ENCODE measurements at regions of chr1 and their contacts with region 1.

Region 1: GRCh38 chr1:206489980-206490770 is 17.2 kb upstream of the RASSF5 start:
- DNase-seq: peak; percentile 89
- H3K4me3 Mint-ChIP-seq: no peak overlapping the region
- H3K27ac Mint-ChIP-seq: no peak overlapping the region
- H3K4me1 Mint-ChIP-seq: no peaks in the 10 kb centered on the region
- H3K27me3 Mint-ChIP-seq: no peaks in the 10 kb centered on the region
- CTCF ChIP-seq: peak; percentile 100

Region 2: DNA sequence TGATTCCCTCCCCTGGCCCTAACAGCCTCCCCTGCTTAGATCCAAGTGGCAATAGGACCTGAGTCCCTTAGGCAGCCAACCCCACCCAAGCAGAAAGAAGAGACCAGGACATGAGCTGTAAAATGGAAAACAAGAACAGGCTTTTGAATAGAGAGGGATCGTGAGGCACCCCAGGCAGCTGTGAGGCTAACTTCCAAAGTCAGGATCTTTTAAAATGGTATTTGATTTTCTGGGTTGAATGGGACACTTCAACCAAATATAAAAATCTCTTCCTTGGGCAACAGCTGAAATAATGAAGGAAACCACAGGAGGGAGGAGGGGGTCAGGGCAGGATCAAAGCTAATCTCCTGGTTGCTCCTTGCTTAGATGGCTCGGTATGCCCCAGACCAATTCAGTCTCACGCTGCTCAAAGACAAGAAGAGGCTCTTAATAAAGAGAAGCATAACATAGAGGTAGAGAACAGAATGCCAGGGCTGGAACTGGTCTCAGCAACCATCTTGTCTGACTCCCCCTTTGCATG is 344.3 kb before region 1 on chr1:
- CTCF ChIA-PET with region 1: no interaction called
- POLR2A ChIA-PET with region 1: no interaction called
- intact Hi-C with region 1: no loop called
- DNase-seq: no peak
- H3K4me3 Mint-ChIP-seq: no peak overlapping the region
- H3K27ac Mint-ChIP-seq: no peak overlapping the region
- H3K4me1 Mint-ChIP-seq: no peaks in the 10 kb centered on the region
- H3K27me3 Mint-ChIP-seq: peaks cover 60% of the 10 kb centered on the region
- CTCF ChIP-seq: no peak

Region 3: GRCh38 chr1:206469933-206470691 is 20.1 kb before region 1 on chr1 and contains the start of gene IKBKE:
- CTCF ChIA-PET with region 1: interaction called, 31 read pairs
- POLR2A ChIA-PET with region 1: interaction called, 3 read pairs
- intact Hi-C with region 1: no loop called
- DNase-seq: peak; percentile 85
- H3K4me3 Mint-ChIP-seq: peak within 1 kb of the TSS; percentile 75
- H3K27ac Mint-ChIP-seq: peak within 1 kb of the TSS; percentile 61
- H3K4me1 Mint-ChIP-seq: peaks cover 43% of the 10 kb centered on the region
- H3K27me3 Mint-ChIP-seq: peaks cover 13% of the 10 kb centered on the region
- CTCF ChIP-seq: no peak
- total RNA-seq, gene IKBKE: 7.1 and 12.1 TPM in 2 replicates

Region 4: GRCh38 chr1:206507284-206508129 is 17.3 kb after region 1 on chr1 and contains the start of gene RASSF5:
- CTCF ChIA-PET with region 1: interaction called, 166 read pairs
- POLR2A ChIA-PET with region 1: interaction called, 5 read pairs
- intact Hi-C with region 1: no loop called
- DNase-seq: peak; percentile 87
- H3K4me3 Mint-ChIP-seq: peak within 1 kb of the TSS; percentile 72
- H3K27ac Mint-ChIP-seq: peak within 1 kb of the TSS; percentile 72
- H3K4me1 Mint-ChIP-seq: peaks cover 74% of the 10 kb centered on the region
- H3K27me3 Mint-ChIP-seq: no peaks in the 10 kb centered on the region
- CTCF ChIP-seq: no peak
- total RNA-seq, gene RASSF5: 8.3 and 9.6 TPM in 2 replicates

Region 5: GRCh38 chr1:206544562-206545257 is 54.5 kb after region 1 on chr1:
- CTCF ChIA-PET with region 1: interaction called, 145 read pairs
- POLR2A ChIA-PET with region 1: interaction called, 5 read pairs
- intact Hi-C with region 1: no loop called
- DNase-seq: peak; percentile 89
- H3K4me3 Mint-ChIP-seq: no peak overlapping the region
- H3K27ac Mint-ChIP-seq: no peak overlapping the region
- H3K4me1 Mint-ChIP-seq: no peaks in the 10 kb centered on the region
- H3K27me3 Mint-ChIP-seq: no peaks in the 10 kb centered on the region
- CTCF ChIP-seq: peak; percentile 98

Region 6: DNA sequence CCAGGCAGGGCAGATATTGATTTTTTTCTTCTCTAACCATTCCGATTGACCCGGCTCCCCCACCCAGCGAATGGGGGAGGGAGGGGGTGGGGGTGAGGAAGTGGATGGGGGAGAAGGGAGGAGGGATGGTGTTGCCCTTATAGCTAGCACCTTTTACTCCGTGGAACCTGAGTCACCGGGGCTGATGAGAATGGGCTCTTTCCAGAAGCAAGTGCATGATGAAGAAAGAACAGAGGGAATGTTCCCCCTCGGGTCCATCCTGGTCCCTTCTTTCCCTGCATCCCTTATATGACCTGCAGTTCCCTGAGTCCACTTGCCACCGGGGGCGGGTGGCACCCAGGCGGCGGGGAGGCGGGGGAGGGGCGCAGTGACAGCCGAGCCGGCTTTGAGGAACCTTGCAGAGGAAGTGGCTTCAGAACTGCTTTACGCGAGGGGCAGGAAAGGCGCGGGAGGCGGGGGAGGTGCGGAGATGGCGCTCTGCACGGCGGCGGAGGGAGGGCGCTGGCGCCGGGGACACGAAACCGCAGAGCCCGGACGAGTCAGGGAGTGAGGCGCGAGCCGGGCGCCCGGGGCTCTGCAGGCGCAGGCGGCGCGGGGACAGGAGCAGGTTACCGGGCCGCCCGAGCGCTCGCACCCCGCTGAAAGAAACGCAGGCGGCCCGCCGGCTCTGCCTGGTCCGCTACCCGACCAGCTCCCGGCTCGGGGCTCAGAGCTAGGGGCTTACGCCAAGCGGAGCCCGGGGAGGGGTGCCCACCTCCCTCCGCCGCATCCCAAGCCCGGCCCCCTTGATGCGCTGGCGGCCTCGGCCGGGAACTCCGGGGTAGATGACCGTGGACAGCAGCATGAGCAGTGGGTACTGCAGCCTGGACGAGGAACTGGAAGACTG is 66.8 kb after region 1 on chr1:
- CTCF ChIA-PET with region 1: interaction called, 16 read pairs
- POLR2A ChIA-PET with region 1: interaction called, 3 read pairs
- intact Hi-C with region 1: no loop called
- DNase-seq: peak; percentile 66
- H3K4me3 Mint-ChIP-seq: peak overlapping the region; percentile 68
- H3K27ac Mint-ChIP-seq: no peak overlapping the region
- H3K4me1 Mint-ChIP-seq: no peaks in the 10 kb centered on the region
- H3K27me3 Mint-ChIP-seq: no peaks in the 10 kb centered on the region
- CTCF ChIP-seq: no peak

Region 7: DNA sequence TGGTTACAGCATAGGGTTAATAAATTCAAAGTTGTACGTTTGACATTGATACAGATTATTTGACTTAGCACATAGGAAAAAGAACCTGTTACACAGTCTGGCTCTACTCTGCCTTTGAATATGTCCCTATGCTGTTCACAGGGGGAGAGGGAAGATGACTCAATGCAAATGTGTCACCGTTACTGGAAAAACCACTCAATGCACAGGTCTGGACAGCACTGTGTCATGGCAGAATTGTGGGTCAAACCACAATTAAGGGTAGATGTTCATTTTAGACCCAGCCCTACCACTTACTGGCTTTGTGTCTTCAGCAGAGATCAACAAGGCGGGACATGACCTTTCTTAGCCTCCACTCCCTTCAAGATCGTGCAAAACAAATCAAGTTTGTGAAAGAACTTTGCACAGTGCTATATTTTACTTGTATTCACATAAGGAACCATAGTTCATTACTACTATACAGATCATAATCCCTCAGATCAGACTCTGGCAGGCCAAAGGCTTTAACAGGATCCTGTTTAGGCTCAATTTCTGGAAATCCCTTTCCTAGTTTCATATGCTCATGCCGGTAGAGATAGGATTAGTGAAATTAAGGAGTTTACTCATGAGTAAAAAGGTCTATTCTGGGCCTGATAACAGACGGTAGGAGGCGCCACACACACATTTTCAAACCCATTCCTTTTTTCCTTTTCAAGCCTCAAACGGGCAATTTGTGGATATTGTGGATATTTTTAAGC is 100.0 kb after region 1 on chr1:
- CTCF ChIA-PET with region 1: interaction called, 851 read pairs
- POLR2A ChIA-PET with region 1: interaction called, 25 read pairs
- intact Hi-C with region 1: no loop called
- DNase-seq: peak; percentile 95
- H3K4me3 Mint-ChIP-seq: no peak overlapping the region
- H3K27ac Mint-ChIP-seq: peak overlapping the region; percentile 66
- H3K4me1 Mint-ChIP-seq: peaks cover 28% of the 10 kb centered on the region
- H3K27me3 Mint-ChIP-seq: no peaks in the 10 kb centered on the region
- CTCF ChIP-seq: peak; percentile 41

Region 8: GRCh38 chr1:206635080-206635977 is 145.2 kb after region 1 on chr1 and contains the start of gene DYRK3:
- CTCF ChIA-PET with region 1: interaction called, 12 read pairs
- POLR2A ChIA-PET with region 1: no interaction called
- intact Hi-C with region 1: no loop called
- DNase-seq: peak; percentile 99
- H3K4me3 Mint-ChIP-seq: peak within 1 kb of the TSS; percentile 89
- H3K27ac Mint-ChIP-seq: peak within 1 kb of the TSS; percentile 82
- H3K4me1 Mint-ChIP-seq: peaks cover 38% of the 10 kb centered on the region
- H3K27me3 Mint-ChIP-seq: no peaks in the 10 kb centered on the region
- CTCF ChIP-seq: no peak
- total RNA-seq, gene DYRK3: 45.4 and 58.5 TPM in 2 replicates